Mammary epithelial cell (primary cell): ENCODE measurements at regions of chr2 and their contacts with region 1.

Region 1: GRCh38 chr2:76599732-76600368 is 889.1 kb upstream of the GCFC2 start:
- DNase-seq: peak; percentile 61
- H3K4me3 ChIP-seq: no peak overlapping the region
- H3K27ac ChIP-seq: no peak overlapping the region
- H3K4me1 ChIP-seq: no peaks in the 10 kb centered on the region
- H3K27me3 ChIP-seq: no peaks in the 10 kb centered on the region
- CTCF ChIP-seq: peak; percentile 81

Region 2: GRCh38 chr2:75640621-75641121 is 959.2 kb before region 1 on chr2:
- CTCF ChIA-PET with region 1: no interaction called
- dilution Hi-C with region 1: no loop called
- in situ Hi-C with region 1: no loop called
- intact Hi-C with region 1: loop called (anchors 5 kb)
- DNase-seq: peak; percentile 53
- H3K4me3 ChIP-seq: no peak overlapping the region
- H3K27ac ChIP-seq: no peak overlapping the region
- H3K4me1 ChIP-seq: peaks cover 4% of the 10 kb centered on the region
- H3K27me3 ChIP-seq: peaks cover 3% of the 10 kb centered on the region
- CTCF ChIP-seq: peak; percentile 100

Region 3: DNA sequence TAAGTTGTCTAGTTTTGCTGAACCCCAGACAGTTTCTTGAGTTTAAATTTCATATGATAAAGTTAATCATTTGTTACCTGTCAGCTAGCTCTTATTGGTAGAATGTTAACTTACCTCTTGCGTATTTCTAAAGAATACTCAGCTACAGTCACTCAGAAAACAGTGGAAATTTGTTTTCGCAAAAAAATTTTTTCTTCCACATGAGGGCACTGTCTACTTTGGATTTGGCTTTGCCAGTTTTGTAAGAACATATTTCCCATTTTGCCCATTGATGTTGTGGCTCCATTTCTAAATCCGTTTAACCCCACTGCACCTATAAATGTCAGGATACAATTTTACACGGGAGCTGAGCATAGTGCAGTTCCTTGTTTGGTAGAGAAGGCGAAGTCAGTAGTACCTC is 870.0 kb before region 1 on chr2:
- CTCF ChIA-PET with region 1: interaction called, 3 read pairs
- dilution Hi-C with region 1: no loop called
- in situ Hi-C with region 1: no loop called
- intact Hi-C with region 1: loop called (anchors 2 kb)
- DNase-seq: no peak
- H3K4me3 ChIP-seq: no peak overlapping the region
- H3K27ac ChIP-seq: no peak overlapping the region
- H3K4me1 ChIP-seq: no peaks in the 10 kb centered on the region
- H3K27me3 ChIP-seq: peaks cover 2% of the 10 kb centered on the region
- CTCF ChIP-seq: peak in 1 of 2 donors; percentile 35

Region 4: GRCh38 chr2:75787532-75788132 is 812.2 kb before region 1 on chr2:
- CTCF ChIA-PET with region 1: no interaction called
- dilution Hi-C with region 1: no loop called
- in situ Hi-C with region 1: loop called in 1 of 2 experiments (anchors 25 kb)
- intact Hi-C with region 1: loop called (anchors 1 kb)
- DNase-seq: peak; percentile 17
- H3K4me3 ChIP-seq: no peak overlapping the region
- H3K27ac ChIP-seq: no peak overlapping the region
- H3K4me1 ChIP-seq: no peaks in the 10 kb centered on the region
- H3K27me3 ChIP-seq: no peaks in the 10 kb centered on the region
- CTCF ChIP-seq: peak; percentile 48 to 53

Region 5: GRCh38 chr2:75896779-75897366 is 703.0 kb before region 1 on chr2:
- CTCF ChIA-PET with region 1: no interaction called
- dilution Hi-C with region 1: no loop called
- in situ Hi-C with region 1: no loop called
- intact Hi-C with region 1: loop called (anchors 2 kb)
- DNase-seq: peak; percentile 30
- H3K4me3 ChIP-seq: no peak overlapping the region
- H3K27ac ChIP-seq: no peak overlapping the region
- H3K4me1 ChIP-seq: no peaks in the 10 kb centered on the region
- H3K27me3 ChIP-seq: no peaks in the 10 kb centered on the region
- CTCF ChIP-seq: peak; percentile 56 to 77

Region 6: DNA sequence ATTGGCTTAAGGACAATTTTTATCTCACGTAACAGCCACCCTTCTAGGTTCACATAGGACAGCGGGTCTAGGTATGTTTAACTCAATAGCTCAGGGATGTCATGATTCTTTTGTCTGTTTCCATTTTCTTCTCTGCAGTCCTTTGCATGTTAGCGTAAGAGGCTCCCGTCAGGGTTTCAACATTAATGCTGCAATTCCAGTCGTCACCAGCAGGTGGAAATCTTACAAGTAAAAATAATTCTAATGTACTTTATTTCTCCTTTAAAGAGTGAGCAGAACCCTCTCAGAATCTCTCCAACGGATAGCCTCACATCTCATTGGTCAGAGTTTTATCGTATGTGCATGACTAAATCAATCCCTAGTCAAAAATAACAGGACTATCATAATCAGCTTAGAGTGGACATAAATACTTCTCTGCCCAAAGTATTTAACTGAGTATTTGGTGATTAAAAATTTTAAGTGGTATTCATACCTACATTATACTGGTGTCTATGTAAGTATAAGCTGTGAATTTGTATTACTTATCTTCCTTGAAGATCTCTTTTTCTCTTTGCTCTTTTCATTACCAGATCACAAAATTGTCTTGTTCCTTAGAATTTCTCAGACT is 401.9 kb before region 1 on chr2:
- CTCF ChIA-PET with region 1: no interaction called
- dilution Hi-C with region 1: no loop called
- in situ Hi-C with region 1: no loop called
- intact Hi-C with region 1: loop called (anchors 2 kb)
- DNase-seq: peak; percentile 42
- H3K4me3 ChIP-seq: no peak overlapping the region
- H3K27ac ChIP-seq: no peak overlapping the region
- H3K4me1 ChIP-seq: no peaks in the 10 kb centered on the region
- H3K27me3 ChIP-seq: no peaks in the 10 kb centered on the region
- CTCF ChIP-seq: peak; percentile 67 to 68

Region 7: DNA sequence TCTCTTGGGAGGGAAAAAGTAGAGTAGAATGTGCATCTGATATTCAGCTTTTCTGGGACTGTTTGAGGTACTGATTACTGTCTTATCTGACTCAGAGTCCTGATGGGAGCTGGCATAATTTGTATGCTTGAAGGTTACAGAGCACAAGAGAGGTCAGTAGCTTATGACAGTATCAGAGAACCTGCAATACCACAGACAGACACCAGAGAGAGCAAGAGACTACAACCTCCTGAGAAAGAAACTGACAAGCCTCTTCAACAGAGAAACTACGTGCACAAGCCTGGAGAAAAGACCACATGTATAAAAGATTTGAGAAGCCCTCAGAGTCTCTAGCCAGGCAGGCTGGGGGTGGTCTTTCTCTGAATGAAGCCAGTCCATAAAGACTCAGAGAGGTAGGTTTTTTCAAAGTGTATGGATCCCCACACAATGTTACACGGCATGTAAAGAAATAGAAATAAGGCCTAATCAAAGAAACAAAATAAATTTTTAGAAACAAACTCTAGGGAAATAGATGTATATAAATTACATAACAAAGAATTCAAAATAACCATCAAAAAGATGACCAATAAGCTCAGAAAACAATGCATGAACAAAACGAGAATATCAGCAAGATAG is 354.0 kb after region 1 on chr2:
- CTCF ChIA-PET with region 1: no interaction called
- dilution Hi-C with region 1: no loop called
- in situ Hi-C with region 1: no loop called
- intact Hi-C with region 1: no loop called
- DNase-seq: peak; percentile 16
- H3K4me3 ChIP-seq: no peak overlapping the region
- H3K27ac ChIP-seq: no peak overlapping the region
- H3K4me1 ChIP-seq: no peaks in the 10 kb centered on the region
- H3K27me3 ChIP-seq: no peaks in the 10 kb centered on the region
- CTCF ChIP-seq: peak; percentile 42 to 58